Caco-2 (cell line): ENCODE measurements at regions of chr2 and their contacts with region 1.

Region 1: DNA sequence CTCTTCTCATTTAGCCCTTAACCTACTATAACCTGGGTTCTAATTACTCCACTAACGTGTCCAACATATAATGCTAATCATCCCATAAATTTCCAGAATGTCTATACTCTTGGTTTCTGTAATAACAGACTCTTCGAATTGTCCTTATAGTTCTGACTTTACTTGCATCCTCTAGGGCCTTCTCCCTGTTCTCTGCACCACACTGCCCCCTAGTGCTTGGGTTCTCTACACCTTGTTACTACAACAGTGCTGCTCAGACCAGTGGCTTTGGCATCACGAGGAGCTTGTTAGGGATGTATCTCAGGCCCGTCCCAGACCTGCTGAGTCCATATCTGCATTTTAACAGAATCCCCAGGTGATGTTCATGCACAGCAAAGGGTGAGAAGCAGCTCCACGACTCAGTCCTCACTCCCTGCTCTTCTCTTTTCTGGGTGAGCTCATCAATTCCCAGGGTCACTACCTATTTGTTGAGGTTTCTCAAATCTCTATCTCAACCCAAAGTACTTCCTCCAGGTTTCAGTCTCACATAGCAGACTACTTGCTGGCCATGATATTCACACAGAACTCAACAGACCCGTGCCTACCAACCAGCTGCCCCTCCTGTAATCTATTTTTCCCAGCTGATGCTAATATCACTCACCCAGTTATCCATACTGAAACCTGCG is 14.5 kb upstream of the DDX1 start:
- DNase-seq: peak; percentile 90 to 92
- H3K4me3 ChIP-seq: no peak overlapping the region
- H3K4me3 Mint-ChIP-seq: no peak overlapping the region
- H3K27ac Mint-ChIP-seq: no peak overlapping the region
- H3K4me1 ChIP-seq: no peaks in the 10 kb centered on the region
- H3K4me1 Mint-ChIP-seq: no peaks in the 10 kb centered on the region
- H3K27me3 ChIP-seq: no peaks in the 10 kb centered on the region
- H3K27me3 Mint-ChIP-seq: peaks cover 3% of the 10 kb centered on the region
- CTCF ChIP-seq: peak; percentile 76 to 95

Region 2: DNA sequence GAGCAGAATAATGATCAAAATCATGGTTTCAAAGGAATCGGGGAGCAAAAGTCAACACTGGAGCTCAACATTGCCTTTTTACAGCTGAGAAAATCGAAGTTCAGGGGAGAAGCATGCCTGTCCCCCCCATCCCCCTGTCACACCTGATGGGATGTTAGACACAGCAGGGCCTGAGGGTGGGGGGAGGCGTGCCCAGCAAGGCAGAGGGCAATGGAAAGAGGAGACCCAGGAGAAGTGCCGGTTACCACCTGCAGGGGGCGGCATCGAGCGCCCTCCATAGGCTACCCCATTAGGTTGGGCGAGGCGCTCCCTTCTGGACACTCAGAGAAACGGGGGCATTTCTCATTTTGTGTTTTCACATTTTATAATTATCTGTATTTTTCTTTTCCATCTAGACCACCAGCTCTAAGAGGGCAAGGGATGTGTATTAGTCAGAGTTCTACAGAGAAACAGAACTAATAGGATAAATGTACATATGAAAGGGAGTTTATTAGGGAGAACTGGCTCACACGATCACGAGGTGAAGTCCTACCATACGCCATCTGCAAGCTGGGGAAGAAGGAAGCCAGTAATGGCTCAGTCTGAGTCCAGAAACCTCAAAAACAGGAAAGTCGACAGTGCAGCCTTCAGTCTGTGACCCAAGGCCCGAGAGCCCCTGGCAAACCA is 673.4 kb before region 1 on chr2:
- CTCF ChIA-PET with region 1: no interaction called
- POLR2A ChIA-PET with region 1: no interaction called
- intact Hi-C with region 1: loop called (anchors 2 kb)
- DNase-seq: peak; percentile 69 to 77
- H3K4me3 ChIP-seq: no peak overlapping the region
- H3K4me3 Mint-ChIP-seq: no peak overlapping the region
- H3K27ac Mint-ChIP-seq: no peak overlapping the region
- H3K4me1 ChIP-seq: no peaks in the 10 kb centered on the region
- H3K4me1 Mint-ChIP-seq: no peaks in the 10 kb centered on the region
- H3K27me3 ChIP-seq: no peaks in the 10 kb centered on the region
- H3K27me3 Mint-ChIP-seq: no peaks in the 10 kb centered on the region
- CTCF ChIP-seq: peak; percentile 80 to 94

Region 3: GRCh38 chr2:15006667-15007066 is 570.5 kb before region 1 on chr2:
- CTCF ChIA-PET with region 1: no interaction called
- POLR2A ChIA-PET with region 1: no interaction called
- intact Hi-C with region 1: loop called (anchors 5 kb)
- DNase-seq: no peak
- H3K4me3 ChIP-seq: no peak overlapping the region
- H3K4me3 Mint-ChIP-seq: no peak overlapping the region
- H3K27ac Mint-ChIP-seq: no peak overlapping the region
- H3K4me1 ChIP-seq: no peaks in the 10 kb centered on the region
- H3K4me1 Mint-ChIP-seq: no peaks in the 10 kb centered on the region
- H3K27me3 ChIP-seq: no peaks in the 10 kb centered on the region
- H3K27me3 Mint-ChIP-seq: no peaks in the 10 kb centered on the region
- CTCF ChIP-seq: no peak

Region 4: GRCh38 chr2:15169326-15170069 is 407.7 kb before region 1 on chr2:
- CTCF ChIA-PET with region 1: interaction called, 3 read pairs
- POLR2A ChIA-PET with region 1: no interaction called
- intact Hi-C with region 1: loop called (anchors 2 kb)
- DNase-seq: peak; percentile 47 to 60
- H3K4me3 ChIP-seq: no peak overlapping the region
- H3K4me3 Mint-ChIP-seq: no peak overlapping the region
- H3K27ac Mint-ChIP-seq: peak overlapping the region; percentile 93
- H3K4me1 ChIP-seq: peaks cover 15% of the 10 kb centered on the region
- H3K4me1 Mint-ChIP-seq: peaks cover 24% of the 10 kb centered on the region
- H3K27me3 ChIP-seq: no peaks in the 10 kb centered on the region
- H3K27me3 Mint-ChIP-seq: no peaks in the 10 kb centered on the region
- CTCF ChIP-seq: no peak

Region 5: GRCh38 chr2:15205562-15205961 is 371.6 kb before region 1 on chr2:
- CTCF ChIA-PET with region 1: interaction called, 11 read pairs
- POLR2A ChIA-PET with region 1: no interaction called
- intact Hi-C with region 1: no loop called
- DNase-seq: no peak
- H3K4me3 ChIP-seq: no peak overlapping the region
- H3K4me3 Mint-ChIP-seq: no peak overlapping the region
- H3K27ac Mint-ChIP-seq: no peak overlapping the region
- H3K4me1 ChIP-seq: no peaks in the 10 kb centered on the region
- H3K4me1 Mint-ChIP-seq: no peaks in the 10 kb centered on the region
- H3K27me3 ChIP-seq: no peaks in the 10 kb centered on the region
- H3K27me3 Mint-ChIP-seq: no peaks in the 10 kb centered on the region
- CTCF ChIP-seq: no peak

Region 6: DNA sequence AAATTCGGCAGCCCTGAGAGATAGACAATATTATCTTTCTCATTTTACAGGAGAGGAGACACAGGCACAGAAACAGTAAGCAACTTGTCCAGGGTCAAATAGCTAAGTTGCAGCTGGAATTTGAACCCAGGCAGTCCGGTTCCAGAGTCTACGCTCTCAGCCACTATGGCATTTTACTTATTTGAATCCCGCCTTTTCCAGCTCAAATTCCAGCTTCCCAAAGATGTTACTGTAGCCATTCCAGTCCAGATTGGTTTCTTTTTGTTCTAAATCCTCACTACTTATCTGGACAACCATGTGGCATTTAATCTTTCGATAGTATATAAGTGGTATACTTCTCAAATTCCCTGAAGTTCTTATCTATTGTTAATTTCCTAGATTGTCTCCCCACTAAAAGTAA is 141.7 kb before region 1 on chr2:
- CTCF ChIA-PET with region 1: interaction called, 3 read pairs
- POLR2A ChIA-PET with region 1: no interaction called
- intact Hi-C with region 1: loop called (anchors 1 kb)
- DNase-seq: peak in 1 of 2 experiments; percentile 12
- H3K4me3 ChIP-seq: no peak overlapping the region
- H3K4me3 Mint-ChIP-seq: no peak overlapping the region
- H3K27ac Mint-ChIP-seq: no peak overlapping the region
- H3K4me1 ChIP-seq: peaks cover 33% of the 10 kb centered on the region
- H3K4me1 Mint-ChIP-seq: peaks cover 35% of the 10 kb centered on the region
- H3K27me3 ChIP-seq: no peaks in the 10 kb centered on the region
- H3K27me3 Mint-ChIP-seq: no peaks in the 10 kb centered on the region
- CTCF ChIP-seq: no peak

Region 7: GRCh38 chr2:15560988-15561573 is 16.1 kb before region 1 on chr2 and contains the start of gene NBAS:
- CTCF ChIA-PET with region 1: interaction called, 20 read pairs
- POLR2A ChIA-PET with region 1: no interaction called
- intact Hi-C with region 1: no loop called
- DNase-seq: peak; percentile 90 to 92
- H3K4me3 ChIP-seq: peak within 1 kb of the TSS; percentile 91
- H3K4me3 Mint-ChIP-seq: peak within 1 kb of the TSS; percentile 79
- H3K27ac Mint-ChIP-seq: peak within 1 kb of the TSS; percentile 69
- H3K4me1 ChIP-seq: peaks cover 10% of the 10 kb centered on the region
- H3K4me1 Mint-ChIP-seq: peaks cover 12% of the 10 kb centered on the region
- H3K27me3 ChIP-seq: no peaks in the 10 kb centered on the region
- H3K27me3 Mint-ChIP-seq: no peaks in the 10 kb centered on the region
- CTCF ChIP-seq: no peak
- total RNA-seq, gene NBAS: 28.8 and 31.1 TPM in 2 replicates